Naive thymus-derived CD4-positive, alpha-beta T cell (primary cell): ENCODE measurements at regions of chr1 and their contacts with region 1.

Region 1: GRCh38 chr1:98821379-98821778 is 159.9 kb downstream of the SNX7 start:
- DNase-seq: no peak
- ATAC-seq: no peak
- H3K4me3 ChIP-seq: no peak overlapping the region
- H3K4me3 Mint-ChIP-seq: no peak overlapping the region
- H3K27ac ChIP-seq: no peak overlapping the region
- H3K27ac Mint-ChIP-seq: no peak overlapping the region
- H3K4me1 ChIP-seq: no peaks in the 10 kb centered on the region
- H3K4me1 Mint-ChIP-seq: peaks cover 0 to 7% (median 0%) of the 10 kb centered on the region in 7 donors
- H3K27me3 ChIP-seq: no peaks in the 10 kb centered on the region
- H3K27me3 Mint-ChIP-seq: no peaks in the 10 kb centered on the region

Region 2: GRCh38 chr1:98839840-98840239 is 18.5 kb after region 1 on chr1:
- CTCF ChIA-PET with region 1: interaction called, 4 read pairs
- POLR2A ChIA-PET with region 1: no interaction called
- intact Hi-C with region 1: loop called in 1 of 2 experiments (anchors 2 kb)
- DNase-seq: no peak
- ATAC-seq: no peak
- H3K4me3 ChIP-seq: no peak overlapping the region
- H3K4me3 Mint-ChIP-seq: no peak overlapping the region
- H3K27ac ChIP-seq: no peak overlapping the region
- H3K27ac Mint-ChIP-seq: no peak overlapping the region
- H3K4me1 ChIP-seq: peaks cover 0 to 13% of the 10 kb centered on the region in 2 donors
- H3K4me1 Mint-ChIP-seq: peaks cover 0 to 31% (median 24%) of the 10 kb centered on the region in 7 donors
- H3K27me3 ChIP-seq: no peaks in the 10 kb centered on the region
- H3K27me3 Mint-ChIP-seq: peaks cover 0 to 1% (median 0%) of the 10 kb centered on the region in 5 donors